ENCODE measurements at regions of chr13 and their contacts with region 1.

Region 1: DNA sequence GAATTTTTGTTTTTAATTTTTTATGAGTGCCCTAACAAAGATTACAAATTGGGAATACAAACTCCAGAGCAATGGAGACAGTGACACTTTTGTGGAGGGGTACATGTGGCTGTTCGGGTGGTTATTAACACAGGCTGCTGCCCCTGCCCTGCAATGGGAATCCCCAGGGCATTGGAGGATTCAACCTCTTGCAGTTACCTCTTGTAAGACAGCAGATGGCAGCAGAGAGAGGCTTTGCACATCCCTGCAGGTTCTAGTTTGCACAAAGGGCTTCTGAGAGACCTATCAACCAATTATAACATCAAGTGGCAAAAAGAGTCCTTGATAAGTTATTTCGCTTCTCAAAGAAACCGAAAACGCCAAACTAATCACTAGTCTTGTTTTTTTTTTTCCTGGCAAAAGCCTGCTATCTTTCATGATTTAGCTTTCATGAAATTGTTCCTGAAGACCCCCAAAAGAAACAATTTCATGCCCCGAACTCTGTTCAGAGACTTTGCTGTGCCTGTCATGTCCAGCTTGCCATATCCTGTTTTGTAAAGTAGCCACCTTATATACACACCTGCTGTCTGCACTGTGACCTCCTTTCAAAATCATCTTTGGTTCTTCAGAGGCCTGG is 10.4 kb downstream of the GJB2 start:
- DNase-seq: no peak
- ATAC-seq: peak; percentile 100
- H3K4me3 Mint-ChIP-seq: no peak overlapping the region
- H3K27ac Mint-ChIP-seq: no peak overlapping the region
- H3K4me1 Mint-ChIP-seq: peaks cover 2% of the 10 kb centered on the region
- H3K27me3 Mint-ChIP-seq: peaks cover 44% of the 10 kb centered on the region
- CTCF ChIP-seq: peak; percentile 42

Region 2: DNA sequence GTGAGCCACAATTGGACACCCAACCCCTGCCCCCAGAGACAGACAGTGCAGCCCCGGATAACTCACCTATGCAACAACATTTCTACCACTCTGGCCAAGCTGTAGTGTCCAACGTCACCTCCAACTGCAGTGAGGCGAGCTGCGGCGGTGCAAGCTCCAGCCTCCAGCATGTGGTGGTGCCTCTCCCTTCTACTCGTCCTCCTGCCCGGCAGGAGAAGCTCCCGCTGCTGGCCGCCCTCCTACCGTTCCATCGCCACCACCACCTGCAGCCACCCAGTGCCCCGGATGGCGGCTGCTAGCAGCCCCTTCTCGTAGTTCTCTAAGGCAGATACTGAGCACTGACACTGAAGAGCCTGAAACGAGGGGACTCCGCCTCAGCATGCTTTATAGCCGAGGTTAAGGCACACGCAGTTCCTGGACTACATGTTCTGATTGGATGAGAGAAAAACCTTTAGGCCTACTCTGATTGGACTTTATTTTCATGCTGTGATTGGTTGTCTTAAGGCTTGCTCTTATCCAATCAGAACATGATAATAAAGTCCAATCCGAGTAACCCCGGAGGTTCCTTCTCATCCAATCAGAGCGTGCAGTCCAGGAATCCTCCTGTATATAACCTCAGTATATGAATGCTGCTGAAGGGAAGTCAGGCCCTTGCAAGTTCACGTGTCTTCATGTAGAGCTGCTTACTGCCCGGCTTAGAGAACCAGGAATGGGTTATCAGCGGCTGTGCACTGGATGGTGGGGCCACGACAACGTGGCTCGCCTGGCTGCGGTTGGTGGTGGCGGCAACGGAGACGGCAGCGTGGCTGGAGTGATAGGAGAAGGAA is 1064.2 kb before region 1 on chr13:
- CTCF ChIA-PET with region 1: no interaction called
- POLR2A ChIA-PET with region 1: no interaction called
- intact Hi-C with region 1: no loop called
- DNase-seq: no peak
- ATAC-seq: no peak
- H3K4me3 Mint-ChIP-seq: no peak overlapping the region
- H3K27ac Mint-ChIP-seq: no peak overlapping the region
- H3K4me1 Mint-ChIP-seq: no peaks in the 10 kb centered on the region
- H3K27me3 Mint-ChIP-seq: no peaks in the 10 kb centered on the region
- CTCF ChIP-seq: no peak

Region 3: GRCh38 chr13:19818210-19818842 is 364.0 kb before region 1 on chr13:
- CTCF ChIA-PET with region 1: no interaction called
- POLR2A ChIA-PET with region 1: no interaction called
- intact Hi-C with region 1: no loop called
- DNase-seq: peak; percentile 17
- ATAC-seq: no peak
- H3K4me3 Mint-ChIP-seq: no peak overlapping the region
- H3K27ac Mint-ChIP-seq: no peak overlapping the region
- H3K4me1 Mint-ChIP-seq: no peaks in the 10 kb centered on the region
- H3K27me3 Mint-ChIP-seq: no peaks in the 10 kb centered on the region
- CTCF ChIP-seq: no peak

Region 4: DNA sequence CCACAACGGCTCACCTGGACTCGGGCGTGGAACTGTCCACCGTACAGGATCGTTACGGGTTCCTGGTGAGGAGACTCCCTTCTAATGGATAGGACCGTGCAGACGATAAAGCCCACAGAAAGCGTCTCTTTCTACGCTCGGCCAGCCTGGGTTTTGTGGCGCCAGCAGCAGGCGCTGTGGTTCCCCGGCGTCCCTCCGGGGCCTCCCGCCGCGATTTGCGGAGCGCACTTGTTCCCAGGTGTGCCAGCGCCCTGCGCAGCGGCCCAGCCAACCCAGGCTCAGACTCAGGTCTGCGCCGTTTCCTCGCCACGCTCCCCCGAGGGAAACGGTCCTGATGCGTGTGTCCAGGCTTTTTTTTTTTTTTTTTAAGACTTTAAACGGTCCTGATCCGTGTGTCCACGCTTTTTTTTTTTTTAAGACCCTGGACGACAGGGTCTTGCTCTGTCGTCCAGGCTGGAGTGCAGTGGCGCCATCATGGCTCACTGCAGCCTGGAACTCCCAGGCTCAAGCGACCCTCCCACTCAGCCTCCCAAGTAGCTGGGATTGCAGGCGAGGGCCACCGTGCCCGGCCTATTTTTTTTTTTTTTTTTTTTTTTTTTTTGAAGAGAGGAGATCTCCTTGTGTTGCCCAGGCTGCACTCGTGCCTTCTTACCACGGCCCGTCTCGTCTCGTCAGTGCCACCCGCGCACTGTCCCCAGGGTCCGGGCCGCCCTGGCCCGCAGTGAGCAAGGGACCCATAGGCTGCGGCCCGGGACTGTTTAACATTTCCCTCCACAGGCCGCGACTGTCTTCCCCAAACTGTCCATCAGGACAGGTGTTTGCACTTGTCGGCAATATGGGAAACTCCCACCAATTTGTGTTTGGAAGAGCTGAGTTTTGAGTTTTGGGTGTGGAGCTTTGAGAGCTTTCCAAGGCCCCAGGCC is 45.3 kb before region 1 on chr13:
- CTCF ChIA-PET with region 1: no interaction called
- POLR2A ChIA-PET with region 1: no interaction called
- intact Hi-C with region 1: no loop called
- DNase-seq: no peak
- ATAC-seq: no peak
- H3K4me3 Mint-ChIP-seq: peak overlapping the region; percentile 7
- H3K27ac Mint-ChIP-seq: no peak overlapping the region
- H3K4me1 Mint-ChIP-seq: peaks cover 7% of the 10 kb centered on the region
- H3K27me3 Mint-ChIP-seq: peaks cover 37% of the 10 kb centered on the region
- CTCF ChIP-seq: no peak

Region 5: GRCh38 chr13:20197361-20197834 is 15.1 kb after region 1 on chr13:
- CTCF ChIA-PET with region 1: interaction called, 6 read pairs
- POLR2A ChIA-PET with region 1: no interaction called
- intact Hi-C with region 1: loop called (anchors 2 kb)
- DNase-seq: no peak
- ATAC-seq: peak; percentile 71
- H3K4me3 Mint-ChIP-seq: no peak overlapping the region
- H3K27ac Mint-ChIP-seq: no peak overlapping the region
- H3K4me1 Mint-ChIP-seq: peaks cover 16% of the 10 kb centered on the region
- H3K27me3 Mint-ChIP-seq: peaks cover 40% of the 10 kb centered on the region
- CTCF ChIP-seq: peak; percentile 6

Region 6: DNA sequence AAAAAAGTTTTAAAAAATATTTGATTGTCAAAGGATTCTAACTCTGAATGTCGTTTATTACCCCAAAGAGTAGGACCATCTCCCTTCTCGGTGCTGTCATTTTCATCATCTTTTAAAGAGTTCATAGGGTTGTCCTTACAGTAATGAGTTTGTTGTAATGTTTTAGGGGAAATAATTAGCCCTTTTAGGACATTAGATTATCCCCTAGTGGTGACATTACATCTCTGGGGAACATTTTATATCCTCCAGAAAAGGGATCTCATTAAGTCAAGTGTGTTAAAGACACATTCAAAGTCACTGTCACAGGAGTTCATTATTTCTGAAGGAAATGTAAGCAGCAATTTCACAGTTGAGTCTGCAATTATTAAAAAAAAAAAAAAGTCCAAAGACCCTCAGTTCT is 149.1 kb after region 1 on chr13:
- CTCF ChIA-PET with region 1: no interaction called
- POLR2A ChIA-PET with region 1: no interaction called
- intact Hi-C with region 1: no loop called
- DNase-seq: no peak
- ATAC-seq: no peak
- H3K4me3 Mint-ChIP-seq: no peak overlapping the region
- H3K27ac Mint-ChIP-seq: no peak overlapping the region
- H3K4me1 Mint-ChIP-seq: no peaks in the 10 kb centered on the region
- H3K27me3 Mint-ChIP-seq: peaks cover 9% of the 10 kb centered on the region
- CTCF ChIP-seq: no peak